ENCODE measurements at regions of chr11 and their contacts with region 1.

Region 1: DNA sequence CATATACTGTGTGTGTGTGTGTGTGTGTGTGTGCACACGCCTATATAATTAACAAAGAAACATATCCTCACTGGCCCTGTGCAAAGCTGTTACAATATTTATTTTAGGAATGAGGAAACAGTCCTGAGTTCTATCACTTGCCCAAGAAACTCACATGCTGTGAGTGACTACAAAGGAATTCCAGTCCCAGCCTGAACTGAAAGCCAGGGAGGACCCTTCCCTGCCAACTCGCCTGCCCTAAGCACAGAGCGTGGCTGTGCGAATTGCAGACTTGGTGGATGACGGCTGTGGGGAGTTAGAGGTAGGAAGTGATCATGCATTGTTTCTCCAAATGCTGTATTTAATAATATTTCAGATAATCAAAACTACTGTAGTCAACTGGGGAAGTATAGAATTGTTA is 26.4 kb upstream of the CD5 start:
- DNase-seq: peak; percentile 77 to 93
- H3K4me3 ChIP-seq: no peak overlapping the region
- H3K27ac ChIP-seq: peak overlapping the region; percentile 10; the same call in 1 of the 2 replicates
- H3K4me1 ChIP-seq: peaks cover 14% of the 10 kb centered on the region; the same call in 1 of the 2 replicates
- H3K27me3 ChIP-seq: no peaks in the 10 kb centered on the region
- CTCF ChIP-seq: no peak

Region 2: DNA sequence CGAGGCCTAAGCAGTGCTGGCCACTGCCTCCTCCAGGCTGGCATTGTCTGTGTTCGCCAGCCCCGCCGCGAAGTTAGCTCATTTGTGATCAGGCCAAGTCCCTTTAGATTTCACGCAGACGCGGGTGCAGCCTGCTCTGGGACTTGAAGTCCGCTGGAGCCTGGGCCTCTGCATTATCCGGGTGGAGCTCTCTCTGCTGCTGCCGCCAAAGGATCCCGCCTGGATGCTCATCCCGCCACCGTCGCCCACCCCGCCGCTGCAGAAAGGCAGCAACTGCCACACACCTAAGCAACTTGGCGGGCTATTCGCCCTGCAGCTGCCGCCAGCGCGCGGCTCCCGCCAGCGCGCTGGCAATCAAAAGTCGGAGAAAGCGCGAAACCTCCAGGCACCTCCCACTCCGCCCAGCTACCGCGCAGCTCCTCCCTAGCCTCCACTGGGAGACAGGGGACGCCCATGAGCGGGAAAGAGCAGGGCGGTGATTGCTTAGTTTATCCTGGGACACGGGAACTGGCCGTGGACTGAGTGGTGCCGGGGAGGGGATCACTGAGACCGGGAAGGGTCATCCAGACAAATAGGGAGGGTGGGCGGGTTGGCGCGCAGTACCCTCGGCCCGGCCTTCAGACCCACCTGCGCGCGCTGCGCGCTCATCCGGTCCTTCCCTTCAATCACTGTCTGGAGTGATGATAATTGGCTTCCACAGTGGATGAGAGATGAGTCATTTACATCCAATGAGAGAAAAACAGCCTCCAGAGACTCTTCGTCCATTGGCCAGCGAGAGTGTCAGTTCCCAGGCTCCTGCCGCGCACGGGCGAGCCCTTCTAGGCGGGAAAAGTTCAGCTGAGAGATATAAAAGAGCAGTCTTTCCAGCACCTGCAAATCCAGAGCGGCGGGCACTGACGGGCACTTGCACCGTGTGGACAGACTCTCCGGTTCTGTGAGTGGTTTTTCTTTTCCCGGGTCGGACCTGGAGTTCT is 1969.2 kb before region 1 on chr11 and contains the start of gene FAM111B:
- CTCF ChIA-PET with region 1: no interaction called
- POLR2A ChIA-PET with region 1: interaction called, 11 read pairs
- intact Hi-C with region 1: no loop called
- DNase-seq: peak; percentile 90 to 94
- H3K4me3 ChIP-seq: peak within 1 kb of the TSS; percentile 60
- H3K27ac ChIP-seq: no peak within 1 kb of the TSS
- H3K4me1 ChIP-seq: peaks cover 5% of the 10 kb centered on the region; the same call in 1 of the 2 replicates
- H3K27me3 ChIP-seq: peaks cover 9% of the 10 kb centered on the region; the same call in 1 of the 2 replicates
- CTCF ChIP-seq: no peak
- total RNA-seq, gene FAM111B: 8.5 and 12.0 TPM in 2 replicates

Region 3: GRCh38 chr11:61161190-61162091 is 85.5 kb after region 1 on chr11 and contains the start of gene VPS37C:
- CTCF ChIA-PET with region 1: no interaction called
- POLR2A ChIA-PET with region 1: no interaction called
- intact Hi-C with region 1: loop called (anchors 5 kb)
- DNase-seq: peak; percentile 76 to 96
- H3K4me3 ChIP-seq: peak within 1 kb of the TSS; percentile 66
- H3K27ac ChIP-seq: peak within 1 kb of the TSS; percentile 81
- H3K4me1 ChIP-seq: peaks cover 67% of the 10 kb centered on the region
- H3K27me3 ChIP-seq: no peaks in the 10 kb centered on the region
- CTCF ChIP-seq: no peak; the same call in 1 of the 2 replicates
- total RNA-seq, gene VPS37C: 27.1 and 29.0 TPM in 2 replicates